Psoas muscle (tissue), 8 donors: ENCODE measurements at regions of chr5 and their contacts with region 1.

Region 1: GRCh38 chr5:135977375-135977928 is 22.7 kb upstream of the LECT2 start:
- DNase-seq: peak; percentile 74 to 84
- ATAC-seq: peak; percentile 84 to 92 (median 88)
- H3K4me3 ChIP-seq: no peak overlapping the region
- H3K27ac ChIP-seq: no peak overlapping the region
- H3K4me1 ChIP-seq: peaks cover 15% of the 10 kb centered on the region
- H3K27me3 ChIP-seq: peaks cover 0 to 3% (median 0%) of the 10 kb centered on the region in 3 donors
- CTCF ChIP-seq: peak; percentile 66

Region 2: GRCh38 chr5:136062366-136063274 is 85.2 kb after region 1 on chr5:
- intact Hi-C with region 1: loop called (anchors 5 to 10 kb)
- DNase-seq: no peak
- ATAC-seq: peak; percentile 41 to 63 (median 54)
- H3K4me3 ChIP-seq: no peak overlapping the region
- H3K27ac ChIP-seq: no peak overlapping the region
- H3K4me1 ChIP-seq: no peaks in the 10 kb centered on the region
- H3K27me3 ChIP-seq: no peaks in the 10 kb centered on the region
- CTCF ChIP-seq: peak; percentile 60

Region 3: DNA sequence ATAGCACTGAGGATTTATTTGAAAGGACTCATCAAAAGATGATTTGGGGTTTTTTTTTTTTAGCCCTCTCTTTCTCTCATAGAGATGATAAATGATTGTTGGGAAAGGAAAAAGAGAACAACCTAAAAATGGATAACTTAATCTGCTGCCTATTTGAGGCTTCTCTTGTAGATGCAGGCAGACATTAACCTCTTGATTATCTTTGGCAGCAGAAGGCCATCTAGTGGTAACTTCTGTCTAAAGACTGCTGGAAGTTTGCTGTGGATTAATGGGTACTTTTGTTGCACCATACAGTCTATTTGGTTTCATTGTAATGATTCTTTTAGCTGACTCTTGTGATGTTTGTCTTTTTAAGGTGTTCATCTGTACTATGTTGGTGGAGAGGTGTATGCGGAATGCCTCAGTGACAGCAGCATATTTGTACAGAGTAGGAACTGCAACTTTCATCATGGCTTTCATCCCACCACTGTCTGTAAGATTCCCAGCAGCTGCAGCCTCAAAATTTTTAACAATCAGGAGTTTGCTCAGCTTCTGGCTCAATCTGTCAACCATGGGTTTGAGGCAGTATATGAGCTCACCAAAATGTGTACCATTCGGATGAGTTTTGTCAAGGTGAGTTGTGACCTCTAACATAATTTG is 196.7 kb after region 1 on chr5:
- intact Hi-C with region 1: no loop called
- DNase-seq: no peak
- ATAC-seq: peak in 3 of 4 donors; percentile 22 to 81 (median 72)
- H3K4me3 ChIP-seq: no peak overlapping the region
- H3K27ac ChIP-seq: no peak overlapping the region
- H3K4me1 ChIP-seq: no peaks in the 10 kb centered on the region
- H3K27me3 ChIP-seq: no peaks in the 10 kb centered on the region
- CTCF ChIP-seq: peak; percentile 55